ENCODE measurements at regions of chr16 and their contacts with region 1.

Region 1: GRCh38 chr16:11698271-11698689 is 30.0 kb downstream of the SNN start:
- DNase-seq: peak; percentile 67
- ATAC-seq: peak; percentile 92
- H3K4me3 Mint-ChIP-seq: no peak overlapping the region
- H3K27ac Mint-ChIP-seq: peak overlapping the region; percentile 76
- H3K4me1 Mint-ChIP-seq: peaks cover 47% of the 10 kb centered on the region
- H3K27me3 Mint-ChIP-seq: no peaks in the 10 kb centered on the region

Region 2: GRCh38 chr16:11816103-11816502 is 117.8 kb after region 1 on chr16:
- CTCF ChIA-PET with region 1: no interaction called
- POLR2A ChIA-PET with region 1: no interaction called
- intact Hi-C with region 1: loop called in 1 of 2 experiments (anchors 1 kb)
- DNase-seq: no peak
- ATAC-seq: no peak
- H3K4me3 Mint-ChIP-seq: no peak overlapping the region
- H3K27ac Mint-ChIP-seq: no peak overlapping the region
- H3K4me1 Mint-ChIP-seq: no peaks in the 10 kb centered on the region
- H3K27me3 Mint-ChIP-seq: no peaks in the 10 kb centered on the region

Region 3: GRCh38 chr16:12010388-12011251 is 312.3 kb after region 1 on chr16:
- CTCF ChIA-PET with region 1: no interaction called
- POLR2A ChIA-PET with region 1: no interaction called
- intact Hi-C with region 1: no loop called
- DNase-seq: peak; percentile 11
- ATAC-seq: peak; percentile 47
- H3K4me3 Mint-ChIP-seq: no peak overlapping the region
- H3K27ac Mint-ChIP-seq: peak overlapping the region; percentile 67
- H3K4me1 Mint-ChIP-seq: peaks cover 21% of the 10 kb centered on the region
- H3K27me3 Mint-ChIP-seq: no peaks in the 10 kb centered on the region